A549 (cell line): ENCODE measurements at regions of chr1 and their contacts with region 1.

Region 1: DNA sequence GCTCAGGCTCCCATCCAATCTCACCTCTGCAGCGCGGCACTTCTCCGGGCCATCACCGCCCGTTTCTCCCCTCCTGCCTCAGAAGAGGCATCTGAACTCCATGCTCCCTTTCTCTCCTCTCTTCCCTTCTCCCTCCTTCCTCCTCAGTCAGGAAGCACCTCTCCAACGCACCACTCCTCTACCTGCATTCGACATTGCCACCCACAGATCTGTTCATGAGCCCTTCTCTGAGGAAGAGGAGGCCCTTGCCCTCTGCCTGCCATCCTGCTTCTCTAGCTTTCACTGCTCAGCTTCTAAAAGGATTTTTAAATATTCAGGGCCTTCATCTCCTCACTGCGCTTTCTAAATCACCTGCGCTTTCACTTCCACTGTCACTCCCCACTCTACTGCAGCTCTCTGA is 120.0 kb downstream of the KIAA0319L start:
- DNase-seq: no peak
- ATAC-seq: no peak
- H3K4me3 ChIP-seq: no peak overlapping the region
- H3K27ac ChIP-seq: no peak overlapping the region
- H3K4me1 ChIP-seq: no peaks in the 10 kb centered on the region
- CTCF ChIP-seq: no peak
- EP300 ChIP-seq: no peak
- POLR2A ChIP-seq: no peak
- RAD21 ChIP-seq: no peak

Region 2: DNA sequence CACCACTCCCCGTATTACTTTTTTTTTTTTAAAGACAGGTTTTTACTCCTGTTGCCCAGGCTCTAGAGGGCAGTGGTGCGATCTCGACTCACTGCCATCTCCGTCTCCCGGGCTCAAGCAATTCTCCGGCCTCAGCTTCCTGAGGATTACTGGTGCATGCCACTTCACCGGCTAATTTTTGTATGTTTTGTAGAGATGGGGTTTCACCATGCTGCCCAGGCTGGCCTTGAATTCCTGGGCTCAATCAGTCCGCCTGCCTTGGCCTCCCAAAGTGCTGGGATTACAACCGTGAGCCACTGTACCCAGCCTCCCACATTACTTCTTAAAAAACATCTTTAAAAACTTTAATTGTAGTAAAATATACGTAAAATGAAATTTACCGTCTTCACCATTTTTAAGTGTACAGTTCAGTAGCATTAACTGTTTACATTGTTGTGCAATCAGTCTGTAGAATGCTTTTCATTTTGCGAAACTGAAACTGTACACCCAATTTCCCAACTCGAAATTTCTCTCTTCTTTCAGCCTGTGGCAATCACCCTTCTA is 91.7 kb before region 1 on chr1:
- CTCF ChIA-PET with region 1: no interaction called
- POLR2A ChIA-PET with region 1: no interaction called
- DNase-seq: peak in 1 of 2 experiments; percentile 2
- ATAC-seq: peak in 1 of 2 experiments; percentile 43; a peak in 2 of 6 replicates
- H3K4me3 ChIP-seq: no peak overlapping the region
- H3K27ac ChIP-seq: no peak overlapping the region
- H3K4me1 ChIP-seq: 0 out of 3 replicates have a peak, but pooled peaks cover 6% of the 10 kb centered on the region
- CTCF ChIP-seq: no peak
- EP300 ChIP-seq: no peak
- POLR2A ChIP-seq: no peak
- RAD21 ChIP-seq: no peak

Region 3: DNA sequence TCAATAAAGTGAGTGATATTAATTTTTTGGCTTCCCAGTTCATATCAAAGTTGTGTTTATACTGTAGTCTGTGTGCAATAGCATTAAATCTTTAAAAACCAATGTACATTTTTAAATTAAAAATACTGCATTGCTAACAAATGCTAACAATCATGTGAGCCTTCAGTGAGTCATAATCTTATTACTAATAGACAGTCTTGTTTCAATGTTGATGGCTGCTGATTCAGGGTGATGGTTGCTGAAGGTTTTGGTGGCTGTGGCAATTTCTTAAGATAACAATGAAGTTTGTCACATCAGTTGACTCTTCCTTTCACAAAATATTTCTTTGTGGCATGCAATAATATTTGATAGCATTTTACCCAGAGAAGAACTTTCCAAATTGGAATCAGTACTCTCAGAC is 59.6 kb before region 1 on chr1:
- CTCF ChIA-PET with region 1: no interaction called
- POLR2A ChIA-PET with region 1: no interaction called
- DNase-seq: no peak
- ATAC-seq: no peak
- H3K4me3 ChIP-seq: no peak overlapping the region
- H3K27ac ChIP-seq: no peak overlapping the region
- H3K4me1 ChIP-seq: no peaks in the 10 kb centered on the region
- CTCF ChIP-seq: no peak
- EP300 ChIP-seq: no peak
- POLR2A ChIP-seq: no peak
- RAD21 ChIP-seq: no peak

Region 4: GRCh38 chr1:35390600-35391494 is 46.4 kb before region 1 on chr1:
- CTCF ChIA-PET with region 1: no interaction called
- POLR2A ChIA-PET with region 1: no interaction called
- DNase-seq: no peak
- ATAC-seq: no peak
- H3K4me3 ChIP-seq: no peak overlapping the region
- H3K27ac ChIP-seq: no peak overlapping the region
- H3K4me1 ChIP-seq: no peaks in the 10 kb centered on the region
- CTCF ChIP-seq: no peak
- EP300 ChIP-seq: no peak
- POLR2A ChIP-seq: no peak
- RAD21 ChIP-seq: no peak

Region 5: DNA sequence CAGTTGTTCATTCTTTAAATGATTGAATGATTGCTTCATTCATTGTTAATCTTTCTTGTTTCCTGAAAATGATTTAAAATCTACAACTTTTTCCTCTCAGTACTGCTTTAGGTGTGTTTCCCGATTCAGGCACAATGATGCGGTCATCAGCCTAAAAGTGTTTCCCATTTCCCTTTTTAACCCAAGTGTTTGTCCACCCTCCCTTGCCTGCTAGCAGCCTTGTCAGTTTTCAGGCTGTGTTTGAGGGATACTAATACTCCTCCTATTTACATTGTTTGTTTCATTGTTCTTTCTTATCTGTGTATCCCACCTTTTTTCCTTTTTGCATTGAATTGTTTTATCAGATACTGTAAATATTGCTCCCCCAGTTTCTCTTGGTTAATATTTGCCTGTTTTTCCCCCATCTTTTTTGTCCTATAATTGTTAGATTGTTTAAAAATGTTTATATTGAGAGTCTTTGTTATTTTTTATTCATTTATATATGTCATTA is 11.1 kb before region 1 on chr1:
- CTCF ChIA-PET with region 1: no interaction called
- POLR2A ChIA-PET with region 1: no interaction called
- DNase-seq: no peak
- ATAC-seq: no peak
- H3K4me3 ChIP-seq: no peak overlapping the region
- H3K27ac ChIP-seq: no peak overlapping the region
- H3K4me1 ChIP-seq: no peaks in the 10 kb centered on the region
- CTCF ChIP-seq: no peak
- EP300 ChIP-seq: no peak
- POLR2A ChIP-seq: no peak
- RAD21 ChIP-seq: no peak

Region 6: GRCh38 chr1:35451125-35451528 is 13.9 kb after region 1 on chr1:
- CTCF ChIA-PET with region 1: interaction called, 23 read pairs
- POLR2A ChIA-PET with region 1: no interaction called
- DNase-seq: peak; percentile 43 to 61
- ATAC-seq: peak; percentile 94 to 98
- H3K4me3 ChIP-seq: no peak overlapping the region
- H3K27ac ChIP-seq: no peak overlapping the region
- H3K4me1 ChIP-seq: peaks cover 2% of the 10 kb centered on the region; the same call in 1 of the 3 replicates
- CTCF ChIP-seq: peak; percentile 62
- EP300 ChIP-seq: no peak
- POLR2A ChIP-seq: no peak
- RAD21 ChIP-seq: peak; percentile 61